ENCODE measurements at regions of chr2 and their contacts with region 1.

Region 1: DNA sequence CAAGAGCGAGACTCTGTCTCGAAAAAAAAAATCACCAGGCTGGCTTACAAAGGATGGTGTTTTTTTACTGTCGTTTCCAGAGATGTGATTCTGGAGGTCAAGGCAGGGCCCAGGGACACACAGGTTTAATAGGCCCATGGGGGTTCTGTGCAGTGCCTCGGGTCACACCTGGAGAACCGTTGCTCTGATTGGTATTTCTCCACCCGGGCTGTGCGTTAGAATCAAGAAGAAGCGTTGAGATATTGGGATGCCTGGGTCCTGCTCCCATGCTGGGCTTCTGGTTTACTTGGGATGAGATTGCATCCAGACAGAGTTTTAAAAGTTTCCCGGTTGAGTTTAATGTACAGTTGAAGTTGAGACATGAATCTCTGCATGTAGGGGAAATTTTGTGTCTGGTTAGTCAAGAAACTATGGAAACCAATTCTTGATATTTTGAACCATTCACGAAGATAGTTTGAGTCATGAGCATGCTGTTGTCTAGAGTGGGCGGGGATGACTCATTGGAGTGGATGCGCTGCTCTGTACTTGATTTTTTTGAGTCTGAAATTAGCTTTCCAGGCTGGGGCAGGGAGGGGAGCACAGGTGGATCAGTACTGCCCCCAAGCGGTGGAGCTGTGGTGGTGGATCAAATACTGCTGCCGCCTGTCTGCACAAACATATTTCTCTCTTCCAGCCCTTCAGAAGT is 50.1 kb downstream of the GREB1 start:
- DNase-seq: peak; percentile 25 to 72 (median 41)
- ATAC-seq: peak; percentile 81
- H3K4me3 ChIP-seq: no peak overlapping the region
- H3K4me3 Mint-ChIP-seq: no peak overlapping the region
- H3K27ac ChIP-seq: no peak overlapping the region
- H3K27ac Mint-ChIP-seq: no peak overlapping the region
- H3K4me1 ChIP-seq: no peaks in the 10 kb centered on the region
- H3K4me1 Mint-ChIP-seq: no peaks in the 10 kb centered on the region
- H3K27me3 ChIP-seq: no peaks in the 10 kb centered on the region
- H3K27me3 Mint-ChIP-seq: peaks cover 5% of the 10 kb centered on the region
- CTCF ChIP-seq: peak; percentile 35

Region 2: GRCh38 chr2:11239666-11240462 is 344.1 kb before region 1 on chr2:
- CTCF ChIA-PET with region 1: no interaction called
- POLR2A ChIA-PET with region 1: no interaction called
- intact Hi-C with region 1: loop called in 1 of 2 experiments (anchors 5 kb)
- DNase-seq: peak in 2 of 14 experiments; percentile 10 to 13
- ATAC-seq: no peak
- H3K4me3 ChIP-seq: no peak overlapping the region
- H3K4me3 Mint-ChIP-seq: no peak overlapping the region
- H3K27ac ChIP-seq: no peak overlapping the region
- H3K27ac Mint-ChIP-seq: no peak overlapping the region
- H3K4me1 ChIP-seq: no peaks in the 10 kb centered on the region
- H3K4me1 Mint-ChIP-seq: no peaks in the 10 kb centered on the region
- H3K27me3 ChIP-seq: no peaks in the 10 kb centered on the region
- H3K27me3 Mint-ChIP-seq: no peaks in the 10 kb centered on the region
- CTCF ChIP-seq: no peak

Region 3: GRCh38 chr2:11477994-11478393 is 106.0 kb before region 1 on chr2:
- CTCF ChIA-PET with region 1: interaction called, 3 read pairs
- POLR2A ChIA-PET with region 1: no interaction called
- intact Hi-C with region 1: loop called (anchors 1 to 5 kb)
- DNase-seq: peak; percentile 67 to 87 (median 75)
- ATAC-seq: peak; percentile 59
- H3K4me3 ChIP-seq: no peak overlapping the region
- H3K4me3 Mint-ChIP-seq: no peak overlapping the region
- H3K27ac ChIP-seq: no peak overlapping the region
- H3K27ac Mint-ChIP-seq: no peak overlapping the region
- H3K4me1 ChIP-seq: peaks cover 9% of the 10 kb centered on the region
- H3K4me1 Mint-ChIP-seq: peaks cover under 1% of the 10 kb centered on the region
- H3K27me3 ChIP-seq: peaks cover 22 to 28% of the 10 kb centered on the region in 2 experiments
- H3K27me3 Mint-ChIP-seq: peaks cover 28% of the 10 kb centered on the region
- CTCF ChIP-seq: peak; percentile 97

Measured in CD4-positive, alpha-beta T cell (primary cell).